ENCODE measurements at regions of chr6 and their contacts with region 1.

Region 1: DNA sequence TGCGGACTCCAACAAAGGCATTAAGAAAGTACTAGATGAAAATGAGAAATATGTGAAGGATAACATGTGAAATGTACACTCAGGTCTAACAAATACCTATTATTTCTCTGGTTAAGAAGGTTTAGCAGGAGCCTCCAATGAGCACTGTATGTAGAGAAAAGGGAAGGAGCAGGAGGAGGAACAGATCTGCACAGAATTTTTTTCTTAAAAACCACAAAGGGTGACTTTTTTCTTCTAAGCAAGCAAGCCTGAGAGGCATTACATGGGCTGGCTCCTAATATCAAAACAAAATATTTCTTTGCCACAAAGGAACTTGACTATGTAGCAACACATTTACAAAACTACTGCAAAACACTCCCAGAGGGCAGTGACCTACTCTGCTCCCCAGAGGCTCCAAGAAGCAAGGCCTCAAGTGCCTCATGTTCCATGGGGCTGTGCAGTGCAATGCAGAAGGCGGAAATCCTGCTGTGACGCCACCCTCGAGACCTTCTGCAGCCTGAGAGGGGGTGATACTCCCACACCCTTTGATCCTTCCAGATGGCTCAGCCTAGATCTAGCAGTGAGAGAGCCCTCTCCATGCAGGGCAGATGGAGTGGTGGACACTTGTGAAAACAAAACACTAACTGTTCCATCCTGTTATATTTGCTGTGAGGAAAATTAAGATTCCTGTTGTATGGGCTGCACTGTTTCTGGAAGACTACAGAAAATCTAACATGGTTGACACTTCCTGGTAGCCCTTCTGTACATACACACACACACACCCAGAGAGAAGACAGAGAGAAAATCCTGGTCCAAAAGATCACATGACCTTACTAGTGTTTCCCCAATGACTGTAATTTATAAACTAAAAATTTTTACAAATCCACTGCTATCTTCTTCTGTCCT is 36.0 kb upstream of the SMIM29 start:
- DNase-seq: peak in 8 of 10 donors; percentile 15 to 64 (median 48)
- H3K4me3 ChIP-seq: peak overlapping the region in 17 of 59 donors; percentile 1 to 40 (median 13)
- H3K27ac ChIP-seq: peak overlapping the region; percentile 59 to 96 (median 87)
- H3K27me3 ChIP-seq: no peaks in the 10 kb centered on the region
- CTCF ChIP-seq: peak in 2 of 56 donors; percentile 6 to 7

Region 2: DNA sequence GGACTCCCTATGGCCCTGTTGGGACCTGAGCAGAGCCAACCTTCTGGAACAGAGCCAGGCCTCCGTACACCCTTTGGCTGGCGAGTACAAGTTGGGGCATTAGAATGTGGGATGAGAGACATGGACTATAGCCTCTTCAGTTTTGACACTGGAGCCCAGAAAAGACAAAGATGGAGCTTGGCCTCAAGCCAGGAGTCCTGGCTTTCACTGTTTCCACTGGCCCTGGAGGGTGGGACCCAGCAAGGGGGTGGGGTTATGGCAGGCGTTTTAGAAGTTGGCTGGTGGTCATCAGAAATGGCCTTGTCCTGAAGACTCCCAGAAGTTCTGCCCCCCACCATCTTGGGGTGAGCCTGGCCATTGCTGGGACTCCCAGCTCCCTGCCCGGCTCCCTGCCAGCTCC is 641.9 kb before region 1 on chr6:
- intact Hi-C with region 1: no loop called
- DNase-seq: no peak
- H3K4me3 ChIP-seq: no peak overlapping the region
- H3K27ac ChIP-seq: no peak overlapping the region
- H3K27me3 ChIP-seq: no peaks in the 10 kb centered on the region
- CTCF ChIP-seq: no peak

Region 3: DNA sequence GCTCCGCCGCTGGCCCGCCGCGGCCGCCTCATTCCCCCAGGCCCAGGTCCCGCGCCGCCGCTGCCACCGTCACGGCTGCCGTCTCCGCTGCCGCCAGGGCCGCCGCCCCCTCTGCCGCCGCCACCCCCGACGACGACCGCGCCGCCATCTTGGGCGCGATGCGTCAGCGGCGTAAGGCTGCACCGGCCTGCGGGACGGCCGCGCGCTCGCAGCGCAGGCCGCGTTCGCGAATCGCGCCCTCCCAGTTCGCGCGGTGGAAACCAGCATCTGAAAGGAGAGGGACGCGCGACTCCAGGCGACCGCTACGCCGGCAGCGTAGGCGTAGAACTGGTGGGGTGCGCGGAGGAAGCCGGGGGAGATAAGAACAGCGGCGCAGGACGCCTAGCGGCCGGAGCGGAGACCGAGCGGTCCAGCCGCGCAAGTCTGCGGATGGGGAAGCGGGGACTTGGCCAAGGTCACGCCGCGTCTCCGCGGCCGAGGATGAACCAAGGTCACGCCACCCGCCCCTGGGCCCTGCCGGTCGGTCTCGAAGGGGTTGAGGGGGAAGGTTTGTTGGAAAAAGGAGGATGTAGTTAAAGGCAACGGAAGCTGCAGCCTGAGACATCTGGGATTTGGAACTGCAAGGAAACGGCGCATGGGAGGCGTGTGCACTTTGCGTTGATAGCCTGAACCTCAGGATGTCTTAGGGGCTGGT is 107.8 kb after region 1 on chr6 and contains the start of gene NUDT3:
- intact Hi-C with region 1: loop called (anchors 2 kb)
- DNase-seq: peak; percentile 88 to 96 (median 94)
- H3K4me3 ChIP-seq: peak within 1 kb of the TSS; percentile 70 to 97 (median 88)
- H3K27ac ChIP-seq: peak within 1 kb of the TSS; percentile 84 to 99 (median 97)
- H3K27me3 ChIP-seq: no peaks in the 10 kb centered on the region
- CTCF ChIP-seq: peak; percentile 64 to 92 (median 84)
- total RNA-seq, gene NUDT3: 107 to 239 (median 169) TPM

Region 4: GRCh38 chr6:34638834-34639736 is 354.3 kb after region 1 on chr6:
- intact Hi-C with region 1: no loop called
- DNase-seq: no peak
- H3K4me3 ChIP-seq: no peak overlapping the region
- H3K27ac ChIP-seq: no peak overlapping the region
- H3K27me3 ChIP-seq: no peaks in the 10 kb centered on the region
- CTCF ChIP-seq: no peak

Measured in dorsolateral prefrontal cortex (tissue), 120 donors.